ENCODE measurements at regions of chr9 and their contacts with region 1.

Region 1: GRCh38 chr9:36008774-36009300 is 27.9 kb upstream of the RECK start:
- DNase-seq: no peak
- H3K4me3 ChIP-seq: no peak overlapping the region
- H3K27ac ChIP-seq: no peak overlapping the region
- H3K27me3 ChIP-seq: no peaks in the 10 kb centered on the region
- CTCF ChIP-seq: peak; percentile 86

Region 2: GRCh38 chr9:35954942-35955546 is 53.8 kb before region 1 on chr9:
- CTCF ChIA-PET with region 1: interaction called, 28 read pairs
- POLR2A ChIA-PET with region 1: no interaction called
- DNase-seq: peak; percentile 78
- H3K4me3 ChIP-seq: no peak overlapping the region
- H3K27ac ChIP-seq: no peak overlapping the region
- H3K27me3 ChIP-seq: no peaks in the 10 kb centered on the region
- CTCF ChIP-seq: peak; percentile 91

Region 3: DNA sequence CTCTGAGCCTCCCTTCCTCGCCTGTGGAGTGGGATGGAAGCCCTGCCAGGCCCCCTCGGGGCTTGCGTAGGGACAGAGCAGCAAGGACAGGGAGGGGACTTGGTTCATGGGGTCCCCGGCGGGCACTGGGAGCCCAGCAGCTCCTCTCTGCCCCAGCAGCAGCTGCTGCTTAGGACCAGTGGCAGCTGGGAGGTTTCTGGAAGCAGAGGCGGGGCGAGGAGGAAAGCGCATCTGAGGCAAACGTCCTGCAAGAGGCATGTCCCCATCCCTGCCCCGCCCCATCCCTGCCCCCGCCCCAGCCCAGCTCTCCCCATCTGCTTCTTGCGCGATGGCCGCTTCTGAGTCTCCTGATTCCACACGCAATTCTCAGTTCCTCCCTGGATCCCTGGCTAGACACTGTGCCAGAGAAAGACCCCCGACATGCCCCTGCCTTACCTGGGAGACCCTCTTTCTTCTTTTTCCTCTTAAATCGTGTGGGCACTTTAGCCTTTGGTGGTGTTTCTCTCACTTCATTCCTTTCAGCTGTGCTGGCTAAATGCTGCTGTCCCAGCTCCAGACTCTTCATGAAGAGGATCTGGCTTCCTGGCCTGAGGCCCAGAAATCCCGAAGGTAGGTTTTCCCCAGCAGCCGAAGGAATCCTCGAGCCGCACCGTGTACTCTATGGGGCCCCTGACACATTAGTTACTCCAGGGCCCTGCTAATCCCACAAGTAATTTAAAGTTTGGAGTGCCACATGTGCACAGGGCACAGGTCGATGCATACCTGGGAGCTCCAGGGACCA is 46.5 kb before region 1 on chr9:
- CTCF ChIA-PET with region 1: interaction called, 28 read pairs
- POLR2A ChIA-PET with region 1: no interaction called
- DNase-seq: peak; percentile 49
- H3K4me3 ChIP-seq: peak overlapping the region; percentile 38
- H3K27ac ChIP-seq: peak overlapping the region; percentile 71
- H3K27me3 ChIP-seq: no peaks in the 10 kb centered on the region
- CTCF ChIP-seq: no peak

Region 4: DNA sequence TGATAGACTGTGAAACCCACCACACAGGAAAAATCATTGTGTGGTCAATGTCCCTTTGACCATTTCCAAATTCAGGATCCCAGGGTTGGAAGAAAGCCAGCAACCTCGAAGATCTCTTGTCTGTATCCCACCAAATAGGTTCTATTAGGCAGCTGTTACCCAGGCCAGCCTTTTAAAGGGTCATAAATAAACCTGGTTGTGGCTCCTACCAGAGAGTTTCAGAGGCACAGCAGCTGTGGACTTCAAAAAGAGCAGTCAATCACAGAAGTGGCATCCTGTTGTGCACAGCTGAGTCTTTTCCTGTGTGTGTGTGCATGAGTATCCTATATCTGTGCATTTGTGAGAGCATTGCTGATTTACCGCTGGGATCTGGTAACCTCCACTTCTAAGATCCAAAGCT is 27.1 kb before region 1 on chr9:
- CTCF ChIA-PET with region 1: interaction called, 21 read pairs
- POLR2A ChIA-PET with region 1: no interaction called
- DNase-seq: no peak
- H3K4me3 ChIP-seq: no peak overlapping the region
- H3K27ac ChIP-seq: no peak overlapping the region
- H3K27me3 ChIP-seq: peaks cover 16% of the 10 kb centered on the region
- CTCF ChIP-seq: no peak

Region 5: DNA sequence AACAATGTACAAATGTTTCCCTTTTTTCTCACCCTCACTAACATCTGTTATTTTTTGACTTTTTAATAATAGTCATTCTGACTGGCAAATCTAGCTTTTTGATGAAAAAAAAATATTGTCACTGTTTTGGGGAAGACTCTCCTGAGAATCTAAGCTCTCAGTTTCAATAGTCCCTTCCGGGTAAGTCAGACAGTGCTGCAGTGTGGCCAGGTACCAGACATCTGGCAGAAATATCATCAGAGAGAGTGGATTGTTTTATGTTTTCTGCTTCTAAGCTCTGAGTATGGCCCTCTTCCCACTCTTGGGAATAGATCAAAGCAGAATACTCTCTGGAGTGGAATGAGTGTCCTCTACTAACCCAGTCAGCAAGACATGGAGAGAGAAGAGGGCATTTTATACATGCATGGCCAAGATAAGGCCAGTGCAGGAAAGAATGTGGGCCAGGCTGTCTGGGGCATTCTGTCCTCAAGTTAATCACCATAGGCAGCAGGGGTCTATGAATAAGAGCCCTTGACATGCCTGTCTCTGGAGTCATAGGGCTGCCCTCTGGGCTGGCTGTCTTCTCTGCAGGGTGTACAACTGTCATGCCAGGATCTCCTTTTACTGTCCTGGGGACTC is 12.4 kb before region 1 on chr9:
- CTCF ChIA-PET with region 1: interaction called, 37 read pairs
- POLR2A ChIA-PET with region 1: no interaction called
- DNase-seq: no peak
- H3K4me3 ChIP-seq: no peak overlapping the region
- H3K27ac ChIP-seq: no peak overlapping the region
- H3K27me3 ChIP-seq: no peaks in the 10 kb centered on the region
- CTCF ChIP-seq: no peak

Region 6: DNA sequence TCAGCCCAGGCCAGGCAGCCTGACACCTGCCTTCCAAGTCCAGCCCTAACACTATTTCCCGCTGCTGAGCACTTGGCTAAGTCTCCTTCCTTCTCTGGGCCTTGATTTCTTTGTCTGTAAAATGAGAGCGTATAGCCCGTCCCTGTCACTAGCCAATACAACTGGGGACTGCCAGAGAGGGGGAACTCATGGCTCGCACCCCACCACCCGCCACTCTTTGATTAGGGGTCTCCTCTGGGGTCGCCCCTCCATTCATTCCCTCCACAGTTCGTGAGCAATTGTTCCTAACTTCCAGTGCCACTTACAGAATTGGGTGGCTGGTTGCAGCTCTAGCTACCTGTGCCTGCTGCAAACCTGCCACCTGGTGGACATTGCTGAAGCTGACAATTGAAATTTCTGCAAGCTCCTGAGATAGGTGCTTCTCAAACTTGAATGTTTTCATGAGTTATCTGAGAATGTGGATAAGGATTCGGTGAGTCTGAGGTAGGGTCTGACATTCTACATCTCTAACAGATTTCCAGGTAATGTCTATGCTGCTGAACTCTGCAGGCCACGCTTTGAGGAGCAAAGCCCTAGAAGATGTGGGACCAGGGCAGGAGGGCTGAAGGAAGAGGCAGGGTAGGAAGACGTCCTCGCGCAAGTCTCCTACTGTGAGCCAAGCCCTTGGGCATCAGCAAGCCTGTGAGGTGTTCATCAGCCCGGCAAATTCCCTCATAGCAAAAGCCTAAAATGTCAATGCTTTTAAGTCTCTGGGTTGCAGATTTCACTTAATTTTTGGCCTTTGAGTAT is 14.6 kb after region 1 on chr9:
- CTCF ChIA-PET with region 1: interaction called, 24 read pairs
- POLR2A ChIA-PET with region 1: no interaction called
- DNase-seq: no peak
- H3K4me3 ChIP-seq: no peak overlapping the region
- H3K27ac ChIP-seq: no peak overlapping the region
- H3K27me3 ChIP-seq: no peaks in the 10 kb centered on the region
- CTCF ChIP-seq: peak; percentile 87

Region 7: GRCh38 chr9:36029765-36030528 is 21.1 kb after region 1 on chr9:
- CTCF ChIA-PET with region 1: interaction called, 16 read pairs
- POLR2A ChIA-PET with region 1: interaction called, 3 read pairs
- DNase-seq: peak; percentile 94
- H3K4me3 ChIP-seq: no peak overlapping the region
- H3K27ac ChIP-seq: peak overlapping the region; percentile 66
- H3K27me3 ChIP-seq: no peaks in the 10 kb centered on the region
- CTCF ChIP-seq: no peak

Region 8: GRCh38 chr9:36092509-36093215 is 83.8 kb after region 1 on chr9:
- CTCF ChIA-PET with region 1: no interaction called
- POLR2A ChIA-PET with region 1: no interaction called
- DNase-seq: no peak
- H3K4me3 ChIP-seq: no peak overlapping the region
- H3K27ac ChIP-seq: no peak overlapping the region
- H3K27me3 ChIP-seq: no peaks in the 10 kb centered on the region
- CTCF ChIP-seq: no peak

Region 9: GRCh38 chr9:36118706-36119105 is 109.9 kb after region 1 on chr9:
- CTCF ChIA-PET with region 1: no interaction called
- POLR2A ChIA-PET with region 1: no interaction called
- DNase-seq: no peak
- H3K4me3 ChIP-seq: no peak overlapping the region
- H3K27ac ChIP-seq: no peak overlapping the region
- H3K27me3 ChIP-seq: no peaks in the 10 kb centered on the region
- CTCF ChIP-seq: no peak

Measured in AG04450 (cell line).